Dorsolateral prefrontal cortex (tissue), 120 donors: ENCODE measurements at regions of chr5 and their contacts with region 1.

Region 1: DNA sequence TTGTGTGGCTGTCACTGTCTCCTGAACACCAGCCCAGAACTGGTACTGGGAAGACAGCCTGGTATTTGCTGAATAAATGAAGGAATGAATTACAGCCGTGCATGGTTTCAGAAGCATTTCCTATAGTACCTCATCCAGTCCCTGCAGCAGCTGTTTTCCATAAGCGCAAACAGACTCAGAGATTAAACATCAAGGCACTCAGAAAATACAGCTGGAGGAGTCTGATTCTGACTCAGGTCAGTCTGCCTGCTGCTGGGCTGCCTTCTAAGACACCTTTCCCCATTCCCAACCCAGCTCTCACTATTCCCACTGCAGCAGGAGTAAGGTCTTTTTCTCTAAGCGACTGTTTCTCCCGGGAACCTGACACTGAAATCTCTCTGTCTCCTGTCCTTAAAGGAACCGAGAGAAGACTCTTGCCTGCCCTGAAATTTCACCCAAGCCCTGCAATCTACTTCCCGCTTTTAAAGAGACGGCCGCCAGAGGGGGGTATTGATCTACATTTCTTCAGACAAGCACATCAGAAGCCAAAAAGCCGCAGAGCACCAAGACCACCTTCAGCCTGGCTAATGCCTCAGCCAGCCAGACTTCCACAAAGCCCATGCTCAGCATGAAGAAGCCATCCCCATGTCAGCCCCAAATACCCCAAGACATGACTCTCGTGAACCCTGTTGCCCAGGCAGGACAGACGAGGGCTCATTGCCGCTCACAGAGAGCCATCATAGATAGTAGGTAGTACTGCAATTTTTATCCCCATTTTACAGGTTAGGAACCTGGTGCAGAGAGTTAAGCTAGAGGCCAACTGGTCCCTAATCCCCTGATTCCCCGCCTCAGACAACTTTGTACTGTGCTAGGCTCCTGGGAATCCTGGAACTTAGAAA is 5.4 kb upstream of the FOXI1 start:
- DNase-seq: peak; percentile 49 to 89 (median 74)
- H3K4me3 ChIP-seq: no peak overlapping the region
- H3K27ac ChIP-seq: no peak overlapping the region
- H3K27me3 ChIP-seq: peaks cover 0 to 3% (median 0%) of the 10 kb centered on the region in 45 donors
- CTCF ChIP-seq: peak; percentile 42 to 87 (median 74)

Region 2: GRCh38 chr5:170173235-170173634 is 72.9 kb after region 1 on chr5:
- intact Hi-C with region 1: no loop called
- DNase-seq: no peak
- H3K4me3 ChIP-seq: no peak overlapping the region
- H3K27ac ChIP-seq: no peak overlapping the region
- H3K27me3 ChIP-seq: no peaks in the 10 kb centered on the region
- CTCF ChIP-seq: no peak

Region 3: DNA sequence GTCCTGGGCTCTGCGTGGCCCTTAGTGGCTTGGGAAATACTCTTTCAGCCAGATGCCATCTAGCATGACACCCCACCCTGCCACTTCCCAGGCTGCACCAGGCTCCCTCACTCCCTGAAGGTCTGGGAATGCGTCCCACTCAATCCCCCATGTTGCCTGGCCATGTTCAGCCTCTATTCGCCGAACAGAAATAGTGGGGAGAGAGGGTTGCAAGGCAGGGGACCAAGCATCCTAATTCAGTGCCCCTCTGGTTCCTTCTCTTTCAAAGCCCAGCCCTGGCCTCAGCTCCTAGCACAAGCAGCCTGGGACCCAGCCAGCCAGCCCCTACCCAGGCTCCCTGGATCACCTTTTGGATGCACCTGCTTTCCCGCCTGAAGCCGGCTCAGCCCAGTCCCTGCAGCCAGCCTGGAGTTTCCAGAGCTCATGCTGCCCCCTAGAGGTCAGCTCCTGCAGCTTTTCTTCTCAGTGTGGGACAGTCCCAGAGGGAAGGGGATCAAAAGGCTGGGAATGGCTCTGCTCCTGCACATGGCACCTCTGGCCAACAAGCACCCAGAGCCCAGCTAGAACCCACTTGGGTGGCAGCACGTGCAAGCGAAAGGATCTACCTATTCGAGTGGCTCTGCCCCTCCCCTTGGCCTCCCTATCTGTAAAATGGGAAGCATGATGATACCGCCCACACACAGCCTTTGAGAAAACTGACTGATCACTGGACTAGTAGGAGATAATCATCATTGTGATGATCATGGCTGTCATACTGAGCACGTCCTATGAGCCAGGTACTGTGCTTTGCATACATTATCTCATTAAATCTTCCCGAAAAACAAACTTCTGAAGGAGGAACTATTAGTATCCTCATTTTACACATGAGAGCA is 83.7 kb after region 1 on chr5:
- intact Hi-C with region 1: loop called (anchors 1 to 5 kb)
- DNase-seq: peak; percentile 39 to 81 (median 62)
- H3K4me3 ChIP-seq: no peak overlapping the region
- H3K27ac ChIP-seq: no peak overlapping the region
- H3K27me3 ChIP-seq: peaks cover 0 to 10% (median 0%) of the 10 kb centered on the region in 45 donors
- CTCF ChIP-seq: peak; percentile 32 to 88 (median 80)

Region 4: DNA sequence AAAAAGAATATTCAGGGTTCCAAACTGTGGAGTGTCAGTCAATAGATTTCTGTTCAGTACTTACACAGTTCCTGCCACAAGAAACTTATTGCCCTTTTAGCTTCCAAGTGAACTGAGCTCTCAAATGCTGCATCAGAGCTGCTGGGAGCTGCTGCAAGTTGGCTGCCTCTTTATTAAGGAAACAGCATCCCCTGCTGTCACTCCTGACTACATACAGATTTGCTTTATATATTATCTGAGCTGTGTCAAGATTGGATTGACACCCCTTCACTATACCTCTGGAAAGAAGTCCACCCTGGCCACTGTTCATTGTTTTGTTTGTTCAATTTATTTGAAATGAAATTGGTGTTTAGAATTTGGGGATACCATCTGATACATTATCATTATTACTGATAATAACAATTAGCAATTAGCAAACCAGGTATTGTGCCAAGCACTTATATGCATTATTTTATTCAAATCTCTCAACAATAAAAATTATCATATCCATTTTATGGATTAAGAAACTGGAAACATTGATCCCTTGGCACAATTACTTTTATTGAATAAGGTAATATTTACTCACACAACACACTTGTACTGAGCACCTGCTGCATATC is 116.1 kb after region 1 on chr5:
- intact Hi-C with region 1: loop called in 1 of 2 experiments (anchors 2 kb)
- DNase-seq: peak in 1 of 10 donors; percentile 48
- H3K4me3 ChIP-seq: no peak overlapping the region
- H3K27ac ChIP-seq: no peak overlapping the region
- H3K27me3 ChIP-seq: peaks cover 0 to 12% (median 0%) of the 10 kb centered on the region in 45 donors
- CTCF ChIP-seq: peak in 55 of 56 donors; percentile 31 to 74 (median 59)

Region 5: DNA sequence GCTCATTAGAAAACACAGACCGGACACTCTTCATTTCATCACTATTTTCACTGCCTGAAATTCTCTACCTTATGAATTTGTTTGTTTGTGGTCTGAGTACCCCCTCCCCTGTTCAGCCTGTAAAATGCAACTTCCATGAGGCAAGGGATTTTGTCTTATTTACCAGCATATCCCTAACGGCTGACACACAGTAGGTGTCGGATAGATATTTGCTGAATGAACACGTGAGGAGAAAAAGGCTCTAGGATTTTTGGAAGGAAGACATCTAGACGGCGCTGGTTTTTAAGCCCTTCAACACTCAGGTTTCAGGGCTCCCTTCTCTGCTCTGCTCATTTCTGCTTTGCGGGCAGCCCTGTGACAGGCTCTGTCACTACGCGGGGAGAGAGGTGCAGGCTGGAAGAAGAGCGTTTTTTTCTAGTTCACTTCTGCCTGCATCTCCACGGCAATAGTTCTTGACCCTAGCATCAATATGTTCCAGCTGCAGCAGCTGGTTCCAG is 247.9 kb after region 1 on chr5:
- intact Hi-C with region 1: loop called in 1 of 2 experiments (anchors 5 kb)
- DNase-seq: no peak
- H3K4me3 ChIP-seq: peak overlapping the region in 6 of 59 donors; percentile 22 to 35 (median 26)
- H3K27ac ChIP-seq: no peak overlapping the region
- H3K27me3 ChIP-seq: peaks cover 0 to 20% (median 3%) of the 10 kb centered on the region in 45 donors
- CTCF ChIP-seq: peak in 53 of 56 donors; percentile 12 to 72 (median 41)

Region 6: DNA sequence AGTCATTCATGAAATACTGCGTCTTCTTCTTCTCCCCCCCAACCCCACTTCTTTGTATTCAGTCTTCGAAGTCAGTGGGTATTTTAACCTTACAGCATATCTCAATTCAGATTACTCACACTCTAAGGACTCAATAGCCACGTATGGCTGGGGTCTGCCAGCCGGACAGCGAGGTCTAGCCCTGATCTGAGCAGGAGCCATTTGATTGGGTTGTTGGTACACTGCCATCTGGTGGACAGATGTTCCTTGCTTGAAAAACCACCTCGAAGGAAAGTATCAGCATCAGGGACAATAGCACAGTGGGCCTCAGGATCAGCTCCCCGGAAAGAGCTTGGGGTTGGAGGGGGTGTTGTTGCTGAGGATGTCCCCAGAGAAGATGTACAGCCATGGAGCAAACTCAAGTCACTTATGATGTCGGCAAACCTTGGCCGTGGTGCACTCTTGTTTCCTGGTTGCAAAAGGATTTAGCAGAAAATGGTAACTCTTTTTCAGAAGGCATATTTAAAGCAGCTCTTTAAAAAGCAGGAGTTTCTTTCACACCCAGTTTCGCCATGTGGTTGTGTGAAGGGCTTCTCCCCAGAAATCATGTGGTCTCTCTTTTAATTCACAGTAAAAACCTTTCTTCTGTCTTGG is 320.6 kb after region 1 on chr5:
- intact Hi-C with region 1: loop called in 1 of 2 experiments (anchors 5 kb)
- DNase-seq: peak in 5 of 10 donors; percentile 40 to 67 (median 59)
- H3K4me3 ChIP-seq: no peak overlapping the region
- H3K27ac ChIP-seq: peak overlapping the region in 1 of 59 donors; percentile 10
- H3K27me3 ChIP-seq: peaks cover 0 to 5% (median 0%) of the 10 kb centered on the region in 45 donors
- CTCF ChIP-seq: peak; percentile 71 to 91 (median 81)

Region 7: DNA sequence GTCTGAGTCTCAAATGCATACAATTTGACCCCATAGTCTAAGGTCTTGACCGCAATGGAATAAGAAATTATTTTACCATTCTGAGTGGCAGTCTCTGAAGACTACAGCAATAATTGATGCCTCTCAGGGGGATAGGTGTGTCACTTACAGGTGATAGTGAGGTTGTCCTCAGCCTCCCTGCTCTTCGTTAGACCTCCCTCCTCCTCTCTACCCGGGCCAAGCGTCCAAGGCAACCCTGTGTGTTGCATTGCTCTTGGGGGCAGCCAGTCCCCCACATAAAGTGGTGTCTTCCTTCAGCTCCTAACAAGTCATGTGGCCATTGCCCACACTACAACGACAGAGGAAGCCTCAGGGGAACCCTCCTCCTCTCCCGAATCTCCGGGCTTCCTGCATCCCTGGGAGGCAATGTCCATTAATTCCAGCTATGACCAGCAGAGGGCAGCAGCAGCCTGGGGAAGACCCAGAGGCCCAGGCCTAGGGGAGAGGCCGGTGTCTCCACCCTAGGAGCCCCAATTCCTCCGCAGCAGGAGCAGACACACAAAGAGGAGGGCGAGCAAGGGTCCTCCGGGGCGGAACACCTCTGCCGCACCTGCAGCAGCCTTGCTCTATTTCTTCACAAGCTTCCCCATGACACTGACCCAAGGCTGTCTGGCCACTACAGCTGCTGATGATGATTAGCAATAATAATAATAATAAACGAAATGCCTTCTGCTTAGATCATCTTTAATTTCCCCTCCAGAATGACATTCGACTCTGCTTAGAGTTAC is 538.3 kb after region 1 on chr5:
- intact Hi-C with region 1: loop called in 1 of 2 experiments (anchors 10 kb)
- DNase-seq: peak in 9 of 10 donors; percentile 45 to 86 (median 67)
- H3K4me3 ChIP-seq: no peak overlapping the region
- H3K27ac ChIP-seq: no peak overlapping the region
- H3K27me3 ChIP-seq: peaks cover 0 to 18% (median 0%) of the 10 kb centered on the region in 45 donors
- CTCF ChIP-seq: peak; percentile 62 to 92 (median 82)